ENCODE measurements at regions of chr17 and their contacts with region 1.

Region 1: DNA sequence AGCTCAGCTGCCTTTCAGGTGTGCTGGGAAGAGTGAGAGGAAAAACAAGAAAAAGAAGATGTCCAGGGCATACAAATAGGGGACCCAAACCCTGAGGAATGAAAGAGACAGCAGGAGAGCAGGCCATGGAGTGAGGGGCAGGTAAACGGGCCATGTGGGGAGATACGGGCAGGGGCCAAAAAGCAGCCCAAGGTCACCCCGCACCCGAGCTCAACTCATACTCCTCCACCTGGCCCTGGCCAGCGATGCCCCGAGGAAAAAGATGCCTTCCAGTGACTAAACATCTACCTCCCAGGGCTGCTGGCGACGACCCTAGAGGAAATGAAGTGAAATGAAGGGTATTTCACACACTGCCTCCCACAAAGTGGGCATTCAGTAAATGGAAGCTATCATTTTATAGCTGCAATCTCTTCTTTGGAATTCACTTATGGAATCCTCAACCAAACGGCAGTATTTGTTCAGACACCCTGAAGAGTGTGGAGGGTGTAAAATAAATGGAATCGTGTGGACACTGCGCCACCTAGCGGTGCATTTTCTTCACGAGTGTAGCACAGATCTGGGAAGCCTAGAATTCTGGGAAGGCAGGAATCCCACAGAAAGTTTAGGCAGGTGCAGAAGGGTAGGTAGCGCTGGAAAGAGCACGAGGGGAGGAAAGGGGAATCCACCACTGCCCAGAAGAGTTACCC is 14.9 kb downstream of the ELAC2 start:
- DNase-seq: peak; percentile 63 to 86
- H3K4me3 ChIP-seq: no peak overlapping the region
- H3K4me1 ChIP-seq: 0 out of 2 replicates have a peak, but pooled peaks cover 3% of the 10 kb centered on the region
- H3K27me3 ChIP-seq: no peaks in the 10 kb centered on the region

Region 2: DNA sequence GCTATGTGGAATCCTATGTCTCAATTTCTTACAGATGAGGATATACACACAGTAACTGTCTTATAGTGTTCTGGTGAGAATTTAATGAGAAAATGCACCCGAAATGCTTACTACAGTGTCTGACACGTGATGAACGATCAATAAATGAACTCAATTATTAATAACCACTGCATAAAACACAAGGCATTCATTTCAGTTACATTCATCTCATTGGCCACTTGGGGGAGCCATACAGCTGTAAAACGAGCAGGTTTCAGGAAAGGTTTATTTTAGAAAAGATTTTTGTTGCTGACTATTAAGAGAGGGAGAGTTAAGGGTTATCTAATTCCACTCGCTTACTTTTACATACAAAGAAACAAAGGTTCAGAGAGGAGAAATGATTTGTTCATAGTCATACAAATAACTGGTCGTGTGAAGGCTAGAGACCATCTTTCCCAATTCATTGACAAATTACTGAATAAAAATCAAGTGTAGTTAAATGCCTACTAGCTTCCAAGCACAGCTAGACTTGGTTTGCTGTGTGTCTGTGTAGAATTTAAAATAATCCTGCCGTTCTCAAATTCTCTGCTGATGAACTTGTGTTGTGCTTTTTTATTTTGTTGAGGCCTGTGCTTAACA is 822.2 kb before region 1 on chr17:
- in situ Hi-C with region 1: loop called (anchors 10 kb)
- DNase-seq: peak; percentile 52
- H3K4me3 ChIP-seq: no peak overlapping the region
- H3K4me1 ChIP-seq: no peaks in the 10 kb centered on the region
- H3K27me3 ChIP-seq: no peaks in the 10 kb centered on the region

Region 3: GRCh38 chr17:12256380-12256995 is 746.4 kb before region 1 on chr17:
- in situ Hi-C with region 1: loop called (anchors 10 kb)
- DNase-seq: peak; percentile 42 to 44
- H3K4me3 ChIP-seq: no peak overlapping the region
- H3K4me1 ChIP-seq: no peaks in the 10 kb centered on the region
- H3K27me3 ChIP-seq: no peaks in the 10 kb centered on the region

Region 4: DNA sequence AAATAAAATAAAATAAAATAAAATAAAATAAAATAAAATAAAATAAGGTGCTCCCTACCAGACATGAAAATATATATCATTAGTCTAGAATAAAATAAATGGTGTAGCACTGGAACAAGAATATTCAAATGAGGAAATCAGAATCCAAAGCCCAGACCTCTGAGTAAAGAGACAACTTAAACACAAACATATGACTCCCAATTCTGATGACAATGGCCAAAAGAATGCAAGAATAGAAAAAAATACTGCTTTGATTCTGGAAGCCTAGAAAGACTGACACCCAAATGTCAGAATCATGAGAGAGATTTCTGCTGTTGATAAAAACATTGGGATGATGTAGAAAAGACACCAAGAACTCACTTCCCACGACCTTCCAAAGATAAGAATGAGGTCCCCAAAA is 309.3 kb before region 1 on chr17:
- in situ Hi-C with region 1: no loop called
- DNase-seq: no peak
- H3K4me3 ChIP-seq: no peak overlapping the region
- H3K4me1 ChIP-seq: no peaks in the 10 kb centered on the region
- H3K27me3 ChIP-seq: no peaks in the 10 kb centered on the region

Region 5: DNA sequence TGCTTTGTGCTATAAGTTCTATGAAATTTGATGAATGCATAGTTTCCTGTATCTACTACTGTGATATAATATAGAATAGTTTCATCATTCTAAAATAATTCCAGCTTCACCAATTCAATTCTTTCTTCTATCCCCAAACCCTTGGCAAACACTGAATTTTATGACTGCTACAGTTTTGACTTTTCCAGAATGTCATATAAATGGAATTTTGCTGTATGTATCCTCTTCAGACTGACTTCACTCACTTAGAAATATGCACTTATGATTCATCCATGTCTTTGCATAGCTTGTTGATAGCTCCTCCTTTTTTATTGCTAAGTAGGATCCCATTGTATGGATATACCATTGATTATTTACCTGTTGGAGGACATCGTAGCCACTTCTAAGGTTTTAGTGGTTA is 687.9 kb after region 1 on chr17:
- in situ Hi-C with region 1: no loop called
- DNase-seq: no peak
- H3K4me3 ChIP-seq: no peak overlapping the region
- H3K4me1 ChIP-seq: no peaks in the 10 kb centered on the region
- H3K27me3 ChIP-seq: no peaks in the 10 kb centered on the region